Adrenal gland (tissue), 19 donors: ENCODE measurements at regions of chr6 and their contacts with region 1.

Region 1: DNA sequence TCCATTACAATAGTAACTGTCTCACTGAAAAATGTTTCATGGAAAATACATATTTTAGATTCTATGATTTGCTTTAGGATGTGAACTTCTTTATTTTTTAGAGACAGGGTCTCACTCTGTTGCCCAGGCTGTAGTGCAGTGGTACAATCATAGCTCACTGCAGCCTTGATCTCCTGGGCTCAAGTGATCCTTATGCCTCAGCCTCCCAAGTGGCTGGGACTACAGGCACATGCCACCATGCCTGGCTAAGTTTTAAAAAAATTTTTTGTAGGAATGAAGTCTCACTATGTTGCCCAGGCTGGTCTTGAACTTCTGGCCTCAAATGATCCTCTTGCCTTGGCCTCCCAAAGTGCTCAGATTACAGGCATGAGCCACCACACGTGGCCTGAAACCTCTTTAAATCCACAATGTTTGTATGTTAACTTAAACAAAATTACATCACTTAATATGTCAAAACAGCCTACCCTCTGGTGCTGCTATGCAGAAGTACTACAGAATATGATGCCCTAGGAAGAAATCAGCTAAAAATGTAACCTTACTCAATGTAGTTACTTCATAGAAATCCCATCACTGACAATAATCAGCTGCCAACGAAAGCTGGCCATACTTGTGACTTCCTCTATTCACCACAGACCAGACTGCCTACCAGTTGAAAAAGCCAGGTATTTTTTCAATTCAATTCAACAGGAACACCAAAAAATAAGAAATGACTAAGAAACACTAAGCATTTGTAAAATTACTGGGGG is 17.6 kb downstream of the EEF1A1 start:
- DNase-seq: peak in 1 of 7 donors; percentile 29
- H3K4me3 ChIP-seq: no peak overlapping the region
- H3K27ac ChIP-seq: no peak overlapping the region
- H3K4me1 ChIP-seq: no peaks in the 10 kb centered on the region
- H3K27me3 ChIP-seq: no peaks in the 10 kb centered on the region
- CTCF ChIP-seq: no peak
- POLR2A ChIP-seq: no peak

Region 2: DNA sequence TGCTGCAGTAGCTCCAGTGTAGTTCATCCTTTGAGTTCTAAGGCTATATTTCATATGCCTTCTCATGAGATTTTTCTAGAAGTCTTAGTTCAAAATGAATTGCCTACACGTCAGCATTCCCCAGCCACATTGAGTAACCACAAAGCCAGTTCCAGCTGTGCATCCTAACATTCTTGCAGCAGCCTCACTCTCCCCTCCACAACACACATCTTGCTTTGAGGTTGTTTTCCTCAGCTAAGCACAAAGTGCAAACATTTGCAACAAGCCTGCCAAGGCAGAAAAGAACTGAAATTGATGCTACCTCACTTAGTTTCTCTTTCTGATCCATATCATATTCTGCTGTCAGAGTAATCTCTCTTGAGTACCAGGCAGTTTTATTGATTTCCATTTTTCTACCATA is 1042.1 kb before region 1 on chr6:
- intact Hi-C with region 1: no loop called
- DNase-seq: no peak
- H3K4me3 ChIP-seq: no peak overlapping the region
- H3K27ac ChIP-seq: no peak overlapping the region
- H3K4me1 ChIP-seq: no peaks in the 10 kb centered on the region
- H3K27me3 ChIP-seq: no peaks in the 10 kb centered on the region
- CTCF ChIP-seq: no peak
- POLR2A ChIP-seq: no peak

Region 3: GRCh38 chr6:72760114-72760793 is 742.9 kb before region 1 on chr6:
- intact Hi-C with region 1: no loop called
- DNase-seq: no peak
- H3K4me3 ChIP-seq: no peak overlapping the region
- H3K27ac ChIP-seq: no peak overlapping the region
- H3K4me1 ChIP-seq: no peaks in the 10 kb centered on the region
- H3K27me3 ChIP-seq: no peaks in the 10 kb centered on the region
- CTCF ChIP-seq: no peak
- POLR2A ChIP-seq: no peak

Region 4: DNA sequence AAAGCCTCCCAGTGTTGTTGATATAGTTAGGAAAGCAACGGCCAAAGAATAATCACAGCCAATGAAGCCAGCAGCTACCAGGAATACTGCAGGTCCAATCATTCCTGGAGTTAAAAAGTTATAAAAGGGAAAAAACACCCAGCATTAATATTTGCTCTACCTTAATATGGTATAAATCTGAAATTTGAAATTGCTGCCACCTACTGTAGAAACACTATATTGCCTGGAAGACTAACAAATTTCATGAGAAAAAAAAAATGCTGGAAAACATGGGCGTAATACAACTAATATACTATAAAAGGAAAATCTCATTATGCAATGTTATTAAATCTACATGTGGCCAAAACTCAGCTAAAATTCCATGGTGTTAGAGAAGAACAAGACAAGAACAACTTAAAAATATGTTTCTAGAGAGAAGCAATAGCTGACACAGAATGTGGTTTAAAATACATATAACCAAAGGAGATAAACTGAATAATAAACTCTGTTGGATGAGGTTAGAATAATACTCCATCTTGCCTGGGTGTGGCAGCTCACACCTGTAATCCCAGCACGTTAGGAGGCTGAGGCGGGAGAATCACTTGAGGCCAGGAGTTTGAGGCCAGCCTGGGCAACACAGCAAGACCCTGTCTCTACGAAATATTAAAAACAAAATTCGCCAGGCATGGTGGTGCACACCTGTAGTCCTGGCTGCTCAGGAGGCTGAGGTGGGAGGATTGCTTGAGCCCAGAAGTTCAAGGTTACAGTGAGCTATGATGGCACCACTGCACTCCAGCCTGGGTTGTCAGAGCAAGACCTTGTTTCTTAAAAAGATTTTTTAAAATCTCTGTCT is 107.5 kb after region 1 on chr6:
- intact Hi-C with region 1: loop called in 1 of 2 experiments (anchors 10 kb)
- DNase-seq: no peak
- H3K4me3 ChIP-seq: no peak overlapping the region
- H3K27ac ChIP-seq: no peak overlapping the region
- H3K4me1 ChIP-seq: peaks cover 0 to 8% of the 10 kb centered on the region in 2 donors
- H3K27me3 ChIP-seq: no peaks in the 10 kb centered on the region
- CTCF ChIP-seq: peak; percentile 36 to 84 (median 67)
- POLR2A ChIP-seq: no peak